Right lobe of liver (tissue), 6 donors: ENCODE measurements at regions of chr14 and their contacts with region 1.

Region 1: GRCh38 chr14:69726761-69727511 is 40.0 kb upstream of the SRSF5 start:
- DNase-seq: peak; percentile 85 to 90 (median 85)
- ATAC-seq: peak; percentile 88 to 91 (median 90)
- H3K4me3 ChIP-seq: peak overlapping the region; percentile 33 to 59 (median 45)
- H3K27ac ChIP-seq: peak overlapping the region in 2 of 3 donors; percentile 26 to 32
- H3K4me1 ChIP-seq: peaks cover 0 to 5% (median 0%) of the 10 kb centered on the region in 4 donors
- H3K27me3 ChIP-seq: no peaks in the 10 kb centered on the region
- CTCF ChIP-seq: peak; percentile 96 to 99 (median 98)
- POLR2A ChIP-seq: no peak

Region 2: DNA sequence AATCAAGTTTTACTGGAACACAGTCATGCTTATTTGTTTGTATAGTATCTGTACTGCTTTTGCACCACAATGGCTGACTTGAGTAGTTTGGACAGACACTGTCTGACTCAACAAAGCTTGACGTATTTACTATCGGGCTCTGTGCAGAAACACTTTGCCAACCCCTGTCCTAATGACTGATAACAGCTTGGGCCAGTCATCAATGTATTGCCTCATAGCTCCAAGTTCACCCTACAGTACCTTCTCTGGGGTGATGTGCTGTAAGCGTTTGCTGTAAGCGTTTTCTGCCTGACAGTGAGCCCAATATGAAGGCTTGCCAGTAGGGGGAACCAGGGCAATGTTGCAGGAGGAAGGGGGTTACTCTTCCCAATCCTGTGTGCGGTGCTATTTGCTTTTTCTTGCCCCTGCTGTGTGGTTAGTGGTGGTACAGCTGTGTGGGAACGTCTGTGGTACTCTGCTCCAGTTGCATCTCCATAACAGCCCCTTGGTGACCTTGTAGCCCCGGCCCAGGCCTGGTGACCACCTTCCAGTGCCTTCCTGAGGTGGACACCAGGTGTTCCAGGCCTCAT is 146.8 kb before region 1 on chr14:
- intact Hi-C with region 1: loop called (anchors 5 to 10 kb)
- DNase-seq: peak in 2 of 3 donors; percentile 41 to 82
- ATAC-seq: peak; percentile 91 to 97 (median 94)
- H3K4me3 ChIP-seq: no peak overlapping the region
- H3K27ac ChIP-seq: peak overlapping the region in 2 of 3 donors; percentile 38 to 73
- H3K4me1 ChIP-seq: no peaks in the 10 kb centered on the region
- H3K27me3 ChIP-seq: no peaks in the 10 kb centered on the region
- CTCF ChIP-seq: peak; percentile 44 to 56 (median 52)
- POLR2A ChIP-seq: no peak

Region 3: GRCh38 chr14:69586404-69586803 is 140.5 kb before region 1 on chr14:
- intact Hi-C with region 1: loop called (anchors 5 to 10 kb)
- DNase-seq: no peak
- ATAC-seq: peak in 2 of 4 donors; percentile 26 to 33
- H3K4me3 ChIP-seq: no peak overlapping the region
- H3K27ac ChIP-seq: no peak overlapping the region
- H3K4me1 ChIP-seq: no peaks in the 10 kb centered on the region
- H3K27me3 ChIP-seq: no peaks in the 10 kb centered on the region
- CTCF ChIP-seq: no peak
- POLR2A ChIP-seq: no peak

Region 4: DNA sequence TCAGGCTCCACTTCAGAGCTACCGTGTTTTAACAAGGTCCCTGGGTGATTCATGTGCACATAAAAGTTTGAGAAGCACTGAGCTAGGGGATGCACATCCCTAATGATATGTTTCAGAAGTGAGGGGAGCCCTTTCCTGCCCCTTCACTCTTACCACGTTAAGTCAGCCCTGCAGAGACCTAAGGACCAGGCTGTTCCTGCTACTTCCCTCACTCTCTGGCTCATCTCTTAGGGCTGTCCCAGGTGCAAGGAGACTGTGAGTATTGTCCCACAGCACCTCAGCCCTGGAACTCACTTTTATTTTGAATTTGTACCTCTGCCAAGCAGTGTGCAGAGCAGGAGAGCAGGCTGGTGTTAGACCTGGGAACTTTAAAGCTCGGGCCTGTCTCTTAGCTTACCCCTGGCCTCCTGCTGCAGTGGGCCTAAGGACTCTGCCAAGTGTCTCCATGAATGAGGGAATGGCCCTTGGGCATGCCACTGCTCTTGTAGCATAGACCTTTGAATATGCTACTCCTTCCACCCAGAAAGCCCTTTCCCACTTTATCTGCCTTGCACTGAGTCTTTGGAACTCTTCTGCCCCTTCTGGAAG is 126.5 kb before region 1 on chr14:
- intact Hi-C with region 1: loop called (anchors 5 kb)
- DNase-seq: no peak
- ATAC-seq: no peak
- H3K4me3 ChIP-seq: no peak overlapping the region
- H3K27ac ChIP-seq: no peak overlapping the region
- H3K4me1 ChIP-seq: no peaks in the 10 kb centered on the region
- H3K27me3 ChIP-seq: no peaks in the 10 kb centered on the region
- CTCF ChIP-seq: no peak
- POLR2A ChIP-seq: no peak

Region 5: GRCh38 chr14:69945912-69946311 is 219.0 kb after region 1 on chr14:
- intact Hi-C with region 1: no loop called
- DNase-seq: no peak
- ATAC-seq: peak in 1 of 4 donors; percentile 11
- H3K4me3 ChIP-seq: no peak overlapping the region
- H3K27ac ChIP-seq: peak overlapping the region in 1 of 3 donors; percentile 55
- H3K4me1 ChIP-seq: peaks cover 0 to 49% (median 23%) of the 10 kb centered on the region in 4 donors
- H3K27me3 ChIP-seq: no peaks in the 10 kb centered on the region
- CTCF ChIP-seq: no peak
- POLR2A ChIP-seq: no peak